Activated CD8-positive, alpha-beta T cell treated with anti-CD3 and anti-CD28 coated beads for 36 hours (primary cell): ENCODE measurements at regions of chr17 and their contacts with region 1.

Region 1: DNA sequence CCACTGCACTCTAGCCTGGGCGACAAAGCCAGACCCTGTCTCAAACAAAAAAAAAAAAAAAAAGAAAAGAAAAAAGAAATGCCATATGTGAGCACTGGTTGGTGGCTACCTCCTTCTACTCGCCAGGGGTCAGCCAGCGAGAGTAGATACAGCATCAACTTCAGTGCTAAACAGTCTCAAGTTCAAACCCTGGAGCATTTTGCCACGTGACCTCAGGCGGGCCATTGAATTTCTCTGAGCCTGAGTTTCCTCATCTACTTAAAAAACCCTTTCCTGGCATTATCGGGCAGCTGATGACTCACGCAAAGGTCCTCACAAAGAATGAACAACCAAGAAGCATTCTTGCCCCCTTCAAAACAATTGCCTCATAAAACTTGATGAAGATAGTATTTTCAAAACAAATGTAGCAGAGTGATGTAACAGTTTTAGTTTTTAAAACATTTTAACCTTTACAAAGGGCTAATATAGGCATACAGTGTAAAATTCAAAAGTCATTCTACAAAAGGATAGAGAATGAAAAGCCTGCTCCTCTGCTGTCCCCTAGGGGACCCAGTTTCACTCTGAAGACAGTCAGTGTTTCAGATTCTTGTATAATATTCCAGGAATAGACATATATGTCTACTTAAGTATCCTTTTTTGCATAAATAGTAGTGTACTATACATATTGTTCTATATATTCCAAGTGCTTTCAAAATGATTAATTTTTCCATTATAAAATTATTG is 28.4 kb downstream of the DNAH2 start:
- DNase-seq: no peak
- ATAC-seq: no peak
- H3K4me3 Mint-ChIP-seq: no peak overlapping the region
- H3K27ac Mint-ChIP-seq: no peak overlapping the region
- H3K4me1 Mint-ChIP-seq: no peaks in the 10 kb centered on the region
- H3K27me3 Mint-ChIP-seq: peaks cover 1% of the 10 kb centered on the region
- CTCF ChIP-seq: no peak

Region 2: DNA sequence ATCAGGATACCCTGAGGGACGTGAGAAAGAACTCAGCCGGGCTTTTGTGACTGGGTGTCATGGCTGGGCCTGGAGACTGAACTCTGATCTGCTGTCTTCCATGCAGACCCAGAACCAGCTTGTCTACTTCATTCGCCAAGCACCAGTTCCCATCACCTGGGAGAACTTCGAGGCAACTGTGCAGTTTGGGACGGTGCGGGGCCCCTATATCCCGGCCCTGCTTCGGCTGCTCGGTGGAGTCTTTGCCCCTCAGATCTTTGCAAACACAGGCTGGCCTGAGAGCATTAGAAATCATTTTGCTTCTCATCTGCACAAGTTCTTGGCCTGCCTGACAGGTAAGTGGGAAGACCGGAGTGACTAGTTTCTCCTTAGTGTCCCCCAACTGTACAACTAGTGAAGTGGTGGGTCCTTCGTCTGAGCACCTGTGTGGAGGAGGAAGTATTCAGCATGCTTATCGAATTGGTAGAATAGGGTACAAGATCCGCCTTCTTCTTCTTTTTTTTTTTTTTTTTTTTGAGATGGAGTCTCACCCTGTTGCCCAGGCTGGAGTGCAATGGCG is 12.8 kb before region 1 on chr17:
- CTCF ChIA-PET with region 1: interaction called, 10 read pairs
- POLR2A ChIA-PET with region 1: interaction called, 3 read pairs
- intact Hi-C with region 1: no loop called
- DNase-seq: no peak
- ATAC-seq: no peak
- H3K4me3 Mint-ChIP-seq: no peak overlapping the region
- H3K27ac Mint-ChIP-seq: no peak overlapping the region
- H3K4me1 Mint-ChIP-seq: no peaks in the 10 kb centered on the region
- H3K27me3 Mint-ChIP-seq: peaks cover 1% of the 10 kb centered on the region
- CTCF ChIP-seq: no peak

Region 3: DNA sequence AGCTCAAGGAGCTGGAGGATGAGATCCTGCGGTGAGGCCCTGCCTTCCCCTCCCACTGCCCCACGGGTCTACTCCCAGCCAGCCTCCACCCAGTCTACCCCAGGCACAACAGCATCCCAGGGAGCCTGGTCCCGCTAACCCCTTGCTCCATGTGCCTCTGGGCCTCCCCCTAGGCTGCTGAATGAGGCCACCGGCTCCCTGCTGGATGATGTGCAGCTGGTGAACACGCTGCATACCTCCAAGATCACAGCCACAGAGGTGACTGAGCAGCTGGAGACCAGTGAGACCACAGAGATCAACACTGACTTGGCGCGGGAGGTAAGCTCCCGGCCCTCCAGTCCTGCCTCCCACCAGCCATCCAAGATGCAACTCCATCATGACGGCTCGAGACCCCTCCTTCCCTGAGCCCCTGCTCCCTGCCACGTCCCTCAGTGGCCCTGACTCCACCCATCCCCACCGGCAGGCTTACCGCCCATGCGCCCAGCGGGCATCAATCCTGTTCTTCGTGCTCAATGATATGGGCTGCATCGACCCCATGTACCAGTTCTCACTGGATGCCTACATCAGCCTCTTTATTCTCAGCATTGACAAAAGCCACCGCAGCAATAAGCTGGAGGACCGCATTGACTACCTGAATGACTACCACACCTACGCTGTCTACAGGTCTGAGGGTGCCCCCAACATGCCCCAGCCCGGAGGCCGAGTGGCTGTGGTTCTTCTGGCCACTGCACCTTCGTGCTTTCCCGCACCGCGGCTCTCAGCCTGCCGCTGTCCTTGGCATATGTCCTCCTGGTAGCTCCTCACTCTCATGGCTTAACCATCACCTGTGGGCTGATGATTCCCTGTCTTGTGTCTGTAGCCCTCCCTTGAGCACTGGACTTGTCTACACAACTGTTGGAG is 73.1 kb after region 1 on chr17:
- CTCF ChIA-PET with region 1: interaction called, 8 read pairs
- POLR2A ChIA-PET with region 1: no interaction called
- intact Hi-C with region 1: loop called (anchors 10 kb)
- DNase-seq: no peak
- ATAC-seq: no peak
- H3K4me3 Mint-ChIP-seq: no peak overlapping the region
- H3K27ac Mint-ChIP-seq: no peak overlapping the region
- H3K4me1 Mint-ChIP-seq: no peaks in the 10 kb centered on the region
- H3K27me3 Mint-ChIP-seq: no peaks in the 10 kb centered on the region
- CTCF ChIP-seq: no peak

Region 4: GRCh38 chr17:7844292-7845154 is 98.6 kb after region 1 on chr17:
- CTCF ChIA-PET with region 1: interaction called, 10 read pairs
- POLR2A ChIA-PET with region 1: no interaction called
- intact Hi-C with region 1: no loop called
- DNase-seq: peak; percentile 91
- ATAC-seq: peak; percentile 45
- H3K4me3 Mint-ChIP-seq: peak overlapping the region; percentile 83
- H3K27ac Mint-ChIP-seq: peak overlapping the region; percentile 98
- H3K4me1 Mint-ChIP-seq: peaks cover 45% of the 10 kb centered on the region
- H3K27me3 Mint-ChIP-seq: no peaks in the 10 kb centered on the region
- CTCF ChIP-seq: no peak